RWPE1 (cell line): ENCODE measurements at regions of chr10 and their contacts with region 1.

Region 1: DNA sequence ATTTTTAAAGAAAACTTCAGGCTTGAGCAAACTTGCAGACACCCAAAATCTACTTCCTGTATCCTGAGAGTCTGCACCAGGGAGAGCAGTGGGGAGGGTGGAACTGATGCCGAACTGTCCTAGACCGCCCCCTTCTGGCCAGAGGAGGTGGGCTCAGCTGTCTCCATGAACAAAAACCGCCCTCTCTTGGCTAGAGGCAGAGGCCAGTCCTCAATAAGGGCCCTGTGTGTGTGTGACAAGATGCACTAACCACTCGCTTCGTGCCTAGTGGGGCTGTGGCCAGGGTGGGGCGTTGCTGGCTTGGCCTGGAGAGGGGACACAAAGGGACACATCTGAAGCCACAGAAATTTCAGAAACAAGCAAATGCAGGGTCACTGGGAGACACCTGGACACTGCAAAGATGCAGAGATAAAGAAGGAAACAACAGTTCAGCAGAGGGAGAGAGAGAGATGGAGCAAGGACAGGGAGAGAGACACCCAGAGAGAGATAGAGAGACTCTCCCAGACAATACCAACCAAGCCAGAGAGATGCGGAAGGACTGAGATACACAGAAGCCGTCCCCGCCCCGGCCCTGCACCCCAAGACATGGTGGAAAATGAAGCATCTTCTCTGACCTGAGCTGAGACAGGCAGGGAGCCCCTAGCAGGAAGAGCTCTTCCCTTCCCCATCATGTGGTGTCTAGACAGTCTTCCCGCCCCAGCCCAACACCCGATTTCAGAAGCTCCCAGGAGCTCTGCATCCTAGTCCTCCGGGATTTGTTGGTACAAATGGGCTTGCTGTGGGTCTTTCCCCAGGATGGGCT is 22.7 kb upstream of the FXYD4 start:
- DNase-seq: peak; percentile 89
- H3K27ac ChIP-seq: peak overlapping the region; percentile 9; the same call in 1 of the 2 replicates
- CTCF ChIP-seq: peak; percentile 78

Region 2: GRCh38 chr10:43265799-43266721 is 82.7 kb before region 1 on chr10:
- CTCF ChIA-PET with region 1: interaction called, 18 read pairs
- POLR2A ChIA-PET with region 1: no interaction called
- DNase-seq: peak; percentile 53
- H3K27ac ChIP-seq: no peak overlapping the region
- CTCF ChIP-seq: no peak

Region 3: GRCh38 chr10:43292755-43293676 is 55.7 kb before region 1 on chr10:
- CTCF ChIA-PET with region 1: interaction called, 13 read pairs
- POLR2A ChIA-PET with region 1: no interaction called
- DNase-seq: peak; percentile 55
- H3K27ac ChIP-seq: no peak overlapping the region
- CTCF ChIP-seq: peak; percentile 77